ENCODE measurements at regions of chr18 and their contacts with region 1.

Region 1: DNA sequence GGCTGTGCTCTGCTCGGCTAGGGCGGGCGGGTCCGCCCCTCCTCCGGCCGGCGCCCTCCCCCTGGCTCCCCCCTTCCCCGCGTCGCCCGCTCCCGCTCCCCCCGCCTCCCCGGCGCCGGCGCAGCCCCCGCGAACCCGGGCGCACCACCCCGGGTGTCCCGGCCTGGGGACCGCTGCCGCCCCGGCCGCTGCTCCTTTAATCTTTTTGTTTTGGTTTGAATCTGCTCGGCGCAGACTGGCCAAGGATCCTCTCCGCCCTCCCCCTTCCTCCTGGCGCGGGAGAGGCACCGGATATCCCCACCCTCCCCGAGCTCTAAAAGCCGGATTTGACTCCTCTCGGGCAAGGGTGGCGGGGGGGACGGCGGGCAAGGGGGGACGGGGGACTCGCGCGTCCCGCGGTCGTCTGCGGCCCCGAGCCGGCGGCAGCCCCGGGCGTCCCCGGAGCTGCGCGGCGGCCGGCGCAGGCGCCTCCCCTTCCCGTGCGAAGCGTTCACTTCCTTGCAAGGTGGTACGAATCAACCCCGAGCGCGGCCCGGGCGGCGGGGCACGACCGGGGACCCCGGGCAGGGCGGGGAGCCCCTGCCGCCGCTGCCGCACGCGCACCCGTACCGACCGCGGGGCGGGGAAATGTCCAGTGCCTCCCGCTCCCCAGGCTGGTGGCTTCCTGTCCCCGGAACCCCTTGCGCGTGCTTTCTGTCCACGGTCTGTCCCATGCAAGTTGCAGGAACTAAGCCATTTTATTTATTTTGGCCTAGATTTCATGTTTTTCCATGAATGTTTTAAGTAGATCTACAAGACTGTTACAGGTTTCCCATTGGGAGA is at the start of gene PTGR3:
- DNase-seq: peak; percentile 91
- ATAC-seq: peak; percentile 56
- H3K4me3 Mint-ChIP-seq: peak within 1 kb of the TSS; percentile 100
- H3K27ac Mint-ChIP-seq: peak within 1 kb of the TSS; percentile 97
- H3K4me1 Mint-ChIP-seq: peaks cover 54% of the 10 kb centered on the region
- H3K27me3 Mint-ChIP-seq: peaks cover 11% of the 10 kb centered on the region
- total RNA-seq, gene PTGR3: 14.4 to 23.3 TPM

Region 2: DNA sequence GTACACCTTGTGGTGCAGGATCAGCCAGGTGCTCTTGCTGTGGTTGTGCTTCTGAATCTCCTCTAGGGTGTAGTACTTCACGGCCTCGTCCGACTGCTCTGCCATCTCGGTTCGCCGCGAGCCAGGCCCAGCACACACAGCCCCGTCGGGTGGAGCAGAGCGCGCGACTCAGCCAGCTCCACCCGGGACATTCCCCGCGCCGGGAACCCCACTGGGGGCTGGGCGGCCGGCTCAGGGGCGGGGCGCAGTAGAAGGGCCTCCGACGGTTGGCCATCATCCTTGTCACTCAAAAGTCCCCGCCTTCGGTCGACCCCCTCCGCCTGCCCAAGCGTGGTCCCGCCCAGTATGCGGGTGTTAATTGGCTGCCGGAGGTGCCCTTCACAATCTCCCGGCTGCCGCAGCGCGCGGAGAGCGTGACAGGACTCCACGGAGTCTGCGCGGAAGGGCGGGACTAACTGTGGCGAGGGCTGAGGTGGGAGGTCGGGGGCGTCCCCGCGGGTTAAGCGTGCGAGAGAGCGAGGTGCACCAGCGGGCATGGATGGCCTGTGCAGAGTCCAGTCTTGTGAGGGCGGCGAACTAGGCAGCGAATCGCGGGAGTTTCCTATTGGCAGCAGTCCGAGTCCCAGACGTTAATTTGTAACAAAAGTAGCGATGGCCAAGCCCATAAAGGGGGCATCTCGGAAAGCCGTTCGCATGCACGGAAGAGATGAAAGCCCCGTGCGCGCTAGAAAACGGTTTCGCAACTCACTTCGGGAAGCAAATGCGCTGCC is 917.4 kb before region 1 on chr18 and contains the start of gene CYB5A:
- CTCF ChIA-PET with region 1: no interaction called
- POLR2A ChIA-PET with region 1: no interaction called
- intact Hi-C with region 1: loop called in 1 of 2 experiments (anchors 5 kb)
- DNase-seq: peak; percentile 98
- ATAC-seq: peak; percentile 99
- H3K4me3 Mint-ChIP-seq: peak within 1 kb of the TSS; percentile 86
- H3K27ac Mint-ChIP-seq: peak within 1 kb of the TSS; percentile 83
- H3K4me1 Mint-ChIP-seq: peaks cover 6% of the 10 kb centered on the region
- H3K27me3 Mint-ChIP-seq: no peaks in the 10 kb centered on the region
- total RNA-seq, gene CYB5A: 53.1 to 61.4 TPM

Region 3: GRCh38 chr18:74623047-74623816 is 586.1 kb before region 1 on chr18:
- CTCF ChIA-PET with region 1: no interaction called
- POLR2A ChIA-PET with region 1: no interaction called
- intact Hi-C with region 1: loop called in 1 of 2 experiments (anchors 10 kb)
- DNase-seq: peak; percentile 47
- ATAC-seq: no peak
- H3K4me3 Mint-ChIP-seq: no peak overlapping the region
- H3K27ac Mint-ChIP-seq: no peak overlapping the region
- H3K4me1 Mint-ChIP-seq: peaks cover 20% of the 10 kb centered on the region
- H3K27me3 Mint-ChIP-seq: no peaks in the 10 kb centered on the region

Region 4: DNA sequence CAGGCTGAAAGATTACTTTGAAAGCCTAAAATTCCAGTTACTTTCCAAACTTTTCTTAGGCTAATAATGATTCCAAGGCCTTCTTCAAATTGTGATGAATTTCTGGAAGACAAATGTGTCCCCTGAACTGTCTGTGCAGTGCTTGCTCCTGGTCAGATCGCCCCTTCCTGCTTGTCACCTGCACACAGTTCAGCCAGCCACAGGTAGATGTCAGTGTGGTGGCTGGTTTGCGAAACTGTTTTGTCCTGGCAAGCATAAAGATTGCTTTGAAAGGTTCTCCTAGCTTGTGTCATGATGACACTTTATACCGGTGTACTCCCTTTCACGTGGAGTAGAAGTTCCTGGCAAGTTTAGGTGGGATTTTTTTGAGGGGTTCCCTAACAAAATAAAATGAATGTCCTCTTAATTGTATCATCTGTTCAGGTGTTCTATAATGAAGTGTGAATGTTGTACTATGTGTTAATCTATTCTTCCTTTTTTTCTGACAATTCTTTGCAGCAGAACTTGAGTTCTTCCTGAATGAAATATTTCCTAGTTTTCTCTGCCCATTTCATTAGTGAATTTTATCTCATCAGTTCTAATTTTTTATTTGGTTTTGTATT is 312.8 kb before region 1 on chr18:
- CTCF ChIA-PET with region 1: no interaction called
- POLR2A ChIA-PET with region 1: no interaction called
- intact Hi-C with region 1: loop called (anchors 10 kb)
- DNase-seq: peak; percentile 62
- ATAC-seq: peak; percentile 60
- H3K4me3 Mint-ChIP-seq: no peak overlapping the region
- H3K27ac Mint-ChIP-seq: no peak overlapping the region
- H3K4me1 Mint-ChIP-seq: peaks cover 3% of the 10 kb centered on the region
- H3K27me3 Mint-ChIP-seq: no peaks in the 10 kb centered on the region

Region 5: DNA sequence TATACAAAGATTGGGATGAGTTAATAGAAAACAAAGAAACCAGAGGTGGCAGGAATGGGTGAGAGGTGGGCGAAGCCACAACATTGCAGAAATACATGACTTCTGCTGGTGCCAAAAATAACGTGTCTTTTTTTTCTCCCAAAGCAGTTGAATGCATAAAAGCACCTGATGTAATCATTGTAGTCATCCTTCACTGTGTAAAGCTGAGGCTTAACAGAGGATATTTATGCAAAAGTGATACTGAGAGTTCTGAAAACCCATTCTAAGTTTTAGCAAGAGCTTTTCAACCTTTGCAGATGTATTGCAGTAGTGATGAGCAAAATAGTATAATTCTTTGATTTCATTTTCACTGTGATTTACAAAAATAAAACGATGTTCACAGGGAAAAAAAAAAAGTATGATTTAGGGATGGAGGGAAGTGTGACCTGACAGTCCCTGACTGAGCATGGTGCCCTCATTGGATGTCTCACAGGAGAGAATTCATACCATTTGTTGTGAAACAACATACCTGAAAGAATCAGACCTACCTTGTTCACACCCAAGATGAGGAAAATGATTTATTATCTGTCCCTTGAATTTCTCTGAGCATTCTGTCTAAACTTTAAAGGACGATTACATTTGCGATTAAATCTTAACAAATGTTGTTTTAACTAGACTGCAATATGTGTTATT is 173.3 kb before region 1 on chr18:
- CTCF ChIA-PET with region 1: no interaction called
- POLR2A ChIA-PET with region 1: interaction called, 16 read pairs
- intact Hi-C with region 1: no loop called
- DNase-seq: no peak
- ATAC-seq: peak; percentile 74
- H3K4me3 Mint-ChIP-seq: no peak overlapping the region
- H3K27ac Mint-ChIP-seq: peak overlapping the region; percentile 30
- H3K4me1 Mint-ChIP-seq: peaks cover 7% of the 10 kb centered on the region
- H3K27me3 Mint-ChIP-seq: no peaks in the 10 kb centered on the region

Region 6: GRCh38 chr18:75247611-75248421 is 38.5 kb after region 1 on chr18:
- CTCF ChIA-PET with region 1: interaction called, 4 read pairs
- POLR2A ChIA-PET with region 1: interaction called, 6 read pairs
- intact Hi-C with region 1: loop called (anchors 1 kb)
- DNase-seq: no peak
- ATAC-seq: peak; percentile 47
- H3K4me3 Mint-ChIP-seq: peak overlapping the region; percentile 77
- H3K27ac Mint-ChIP-seq: peak overlapping the region; percentile 98
- H3K4me1 Mint-ChIP-seq: peaks cover 52% of the 10 kb centered on the region
- H3K27me3 Mint-ChIP-seq: no peaks in the 10 kb centered on the region

Region 7: DNA sequence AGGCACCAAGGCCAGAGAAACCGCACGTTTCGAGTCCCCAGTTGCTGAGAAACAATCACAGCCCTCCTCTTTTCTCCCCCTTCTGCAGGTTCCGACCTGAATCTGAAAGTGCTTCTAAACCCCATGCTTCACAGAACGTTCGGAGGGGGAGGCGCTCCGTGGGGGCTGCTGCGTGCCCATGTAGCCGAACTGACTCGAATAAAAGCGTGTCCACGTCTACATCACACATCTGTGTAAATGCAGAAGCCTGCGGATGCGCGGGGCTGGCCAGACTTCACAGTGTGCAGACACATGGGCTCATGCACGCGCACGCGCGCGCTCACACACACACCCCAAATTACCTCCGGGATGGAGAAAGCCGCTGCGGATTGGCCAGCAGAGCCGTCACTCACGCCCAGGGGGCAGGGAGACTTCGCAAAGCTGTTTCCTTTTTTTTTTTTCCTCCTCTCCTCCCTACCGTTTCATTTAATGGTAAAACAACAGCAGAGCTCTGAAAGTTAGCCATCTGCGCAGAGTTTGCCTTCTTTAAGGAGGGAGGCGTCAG is 1283.4 kb after region 1 on chr18:
- CTCF ChIA-PET with region 1: no interaction called
- POLR2A ChIA-PET with region 1: no interaction called
- intact Hi-C with region 1: loop called (anchors 5 to 10 kb)
- DNase-seq: peak; percentile 100
- ATAC-seq: peak; percentile 85
- H3K4me3 Mint-ChIP-seq: peak overlapping the region; percentile 87
- H3K27ac Mint-ChIP-seq: peak overlapping the region; percentile 89
- H3K4me1 Mint-ChIP-seq: peaks cover 36% of the 10 kb centered on the region
- H3K27me3 Mint-ChIP-seq: peaks cover 33% of the 10 kb centered on the region

Region 8: GRCh38 chr18:76518123-76518859 is 1309.0 kb after region 1 on chr18:
- CTCF ChIA-PET with region 1: no interaction called
- POLR2A ChIA-PET with region 1: no interaction called
- intact Hi-C with region 1: no loop called
- DNase-seq: peak; percentile 15
- ATAC-seq: no peak
- H3K4me3 Mint-ChIP-seq: peak overlapping the region; percentile 47
- H3K27ac Mint-ChIP-seq: no peak overlapping the region
- H3K4me1 Mint-ChIP-seq: peaks cover 11% of the 10 kb centered on the region
- H3K27me3 Mint-ChIP-seq: peaks cover 24% of the 10 kb centered on the region